ENCODE measurements at regions of chr11 and their contacts with region 1.

Region 1: DNA sequence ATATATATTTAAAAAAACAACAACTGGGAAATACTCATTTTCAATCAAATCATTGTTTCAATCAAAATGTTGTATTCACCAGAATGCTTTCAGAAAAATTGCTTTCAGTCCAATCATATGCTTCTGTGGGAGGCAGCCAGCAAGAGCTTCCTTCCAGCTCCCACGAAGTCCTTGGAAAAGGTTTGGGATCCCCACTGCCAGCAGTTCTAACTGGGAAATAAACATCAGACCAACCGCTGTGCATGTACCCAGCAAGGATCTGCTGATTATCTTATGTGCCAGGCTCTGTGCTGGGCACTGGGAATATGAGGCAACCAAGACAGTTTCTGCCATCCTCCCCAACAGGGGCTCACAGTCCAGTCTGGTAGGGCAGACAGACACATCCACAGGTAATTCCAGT is 10.8 kb downstream of the RPS13 start:
- DNase-seq: no peak
- H3K4me3 ChIP-seq: no peak overlapping the region
- H3K27ac ChIP-seq: no peak overlapping the region
- H3K4me1 ChIP-seq: no peaks in the 10 kb centered on the region
- H3K27me3 ChIP-seq: no peaks in the 10 kb centered on the region
- CTCF ChIP-seq: no peak
- POLR2A ChIP-seq: no peak

Region 2: DNA sequence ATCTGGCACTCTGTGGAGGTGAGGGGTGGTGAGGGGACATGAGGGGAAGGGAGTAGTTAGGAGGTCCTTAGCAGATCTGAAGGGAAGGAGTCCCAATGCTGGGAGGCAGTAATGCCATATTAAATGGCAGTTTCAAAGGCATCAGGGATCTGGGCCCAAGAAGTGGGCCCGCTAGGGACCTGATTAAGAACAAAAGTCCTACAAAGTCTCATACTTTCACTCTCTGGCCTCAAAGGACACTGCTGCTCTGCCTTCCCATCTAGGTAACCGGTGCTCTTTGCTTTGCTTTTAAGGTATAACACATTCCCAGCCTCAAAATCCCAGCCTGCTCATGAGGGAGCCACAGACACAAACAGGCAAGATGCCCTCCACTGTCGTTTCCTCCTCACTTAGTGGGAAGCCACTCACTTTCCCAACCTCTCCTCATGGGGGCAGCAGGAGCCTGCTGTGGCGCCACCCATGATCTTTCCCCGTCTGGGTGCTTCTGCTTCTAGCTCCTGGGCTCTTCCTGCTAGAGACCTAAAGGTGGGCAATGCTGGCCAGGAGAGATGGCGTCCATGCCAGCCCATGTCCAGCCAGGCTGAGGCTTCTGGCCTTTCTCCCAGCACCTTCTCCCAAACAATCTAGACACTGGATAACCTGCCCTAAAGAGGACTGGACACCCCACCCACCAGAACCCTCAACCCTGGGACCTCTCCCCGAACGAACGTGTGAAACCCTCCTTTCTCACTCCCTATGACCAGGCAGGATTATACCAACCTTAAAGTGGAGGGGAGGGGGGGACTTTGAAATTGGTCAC is 120.8 kb before region 1 on chr11:
- intact Hi-C with region 1: loop called (anchors 5 kb)
- DNase-seq: no peak
- H3K4me3 ChIP-seq: no peak overlapping the region
- H3K27ac ChIP-seq: no peak overlapping the region
- H3K4me1 ChIP-seq: peaks cover 0 to 8% (median 0%) of the 10 kb centered on the region in 3 donors
- H3K27me3 ChIP-seq: no peaks in the 10 kb centered on the region
- CTCF ChIP-seq: peak; percentile 25 to 84 (median 61)
- POLR2A ChIP-seq: no peak

Region 3: DNA sequence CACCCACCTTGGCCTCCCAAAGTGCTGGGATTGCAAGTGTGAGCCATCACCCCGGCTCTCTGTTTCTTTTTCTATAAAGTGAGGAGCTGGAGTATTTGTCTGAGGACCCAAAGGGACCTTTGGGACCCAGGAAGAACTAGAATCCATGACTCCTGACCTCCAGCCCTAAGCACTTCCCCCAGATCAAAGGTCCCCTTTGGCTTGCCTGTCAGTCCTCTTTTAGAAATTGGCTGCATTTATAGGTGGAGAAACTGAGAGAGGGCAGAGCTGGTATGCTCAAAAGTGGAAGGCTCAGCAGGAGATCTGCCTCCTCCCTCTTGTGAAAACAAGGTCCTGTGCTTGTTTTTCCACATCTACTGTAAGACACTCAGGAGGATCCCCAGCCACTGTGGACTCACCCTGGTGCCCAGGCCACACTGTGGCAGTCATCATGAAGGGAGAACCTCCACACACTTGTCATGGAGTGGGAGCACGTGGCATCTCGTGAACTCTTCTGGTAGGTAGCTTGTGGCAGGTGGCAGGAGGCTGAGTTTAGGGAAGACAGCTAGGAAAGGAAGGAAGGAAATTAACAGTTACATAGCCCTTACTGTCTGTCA is 40.1 kb before region 1 on chr11:
- intact Hi-C with region 1: no loop called
- DNase-seq: no peak
- H3K4me3 ChIP-seq: no peak overlapping the region
- H3K27ac ChIP-seq: no peak overlapping the region
- H3K4me1 ChIP-seq: no peaks in the 10 kb centered on the region
- H3K27me3 ChIP-seq: no peaks in the 10 kb centered on the region
- CTCF ChIP-seq: no peak
- POLR2A ChIP-seq: no peak